Ascending aorta (tissue), 2 donors: ENCODE measurements at regions of chr11 and their contacts with region 1.

Region 1: DNA sequence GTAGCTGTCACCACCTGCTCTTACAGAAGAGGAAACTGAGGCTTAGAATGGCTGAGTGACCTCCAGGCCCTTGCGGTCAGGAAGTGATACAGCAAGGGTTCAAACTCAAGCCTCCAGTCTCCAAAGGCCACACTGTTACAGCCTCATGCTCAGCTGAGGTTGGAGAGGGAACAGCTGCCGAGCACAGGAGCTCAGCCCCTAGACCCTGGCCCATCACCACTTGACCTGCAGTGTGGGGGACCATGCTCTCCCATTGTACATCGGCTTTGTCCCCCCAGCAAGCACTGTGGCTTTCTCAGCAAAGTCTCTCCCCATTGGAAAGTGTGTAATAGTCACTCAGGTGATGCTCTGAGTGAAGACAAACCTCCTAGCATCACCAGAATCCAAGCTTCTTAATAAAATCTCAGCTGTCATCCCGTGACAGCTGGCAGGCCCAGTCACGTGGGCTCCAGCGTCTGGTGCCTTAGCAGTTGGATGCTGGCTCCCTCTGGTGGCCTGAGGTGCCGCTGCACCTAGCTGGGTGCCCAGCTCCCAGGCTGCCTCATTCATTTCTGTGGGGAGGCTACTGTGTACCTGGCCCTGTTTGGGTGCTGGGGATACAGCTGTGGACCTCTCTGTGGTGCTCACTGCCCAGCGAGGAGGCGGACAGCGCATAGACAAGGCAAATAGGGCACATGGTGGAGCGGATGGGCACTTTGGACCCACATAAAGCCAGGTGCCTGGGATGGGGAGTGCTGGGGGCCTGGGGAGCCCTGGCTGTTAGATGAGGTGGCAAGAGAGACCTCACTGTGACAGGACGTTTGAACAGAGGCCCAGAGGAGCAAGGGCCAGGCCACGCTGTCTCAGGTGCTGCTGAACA is 19.1 kb upstream of the MYRF start:
- DNase-seq: peak; percentile 47 to 88
- H3K4me3 ChIP-seq: no peak overlapping the region
- H3K27ac ChIP-seq: peak overlapping the region; percentile 53 to 74
- H3K4me1 ChIP-seq: peaks cover 0 to 6% of the 10 kb centered on the region in 2 donors
- H3K27me3 ChIP-seq: no peaks in the 10 kb centered on the region
- CTCF ChIP-seq: peak; percentile 96 to 99 (median 98)

Region 2: DNA sequence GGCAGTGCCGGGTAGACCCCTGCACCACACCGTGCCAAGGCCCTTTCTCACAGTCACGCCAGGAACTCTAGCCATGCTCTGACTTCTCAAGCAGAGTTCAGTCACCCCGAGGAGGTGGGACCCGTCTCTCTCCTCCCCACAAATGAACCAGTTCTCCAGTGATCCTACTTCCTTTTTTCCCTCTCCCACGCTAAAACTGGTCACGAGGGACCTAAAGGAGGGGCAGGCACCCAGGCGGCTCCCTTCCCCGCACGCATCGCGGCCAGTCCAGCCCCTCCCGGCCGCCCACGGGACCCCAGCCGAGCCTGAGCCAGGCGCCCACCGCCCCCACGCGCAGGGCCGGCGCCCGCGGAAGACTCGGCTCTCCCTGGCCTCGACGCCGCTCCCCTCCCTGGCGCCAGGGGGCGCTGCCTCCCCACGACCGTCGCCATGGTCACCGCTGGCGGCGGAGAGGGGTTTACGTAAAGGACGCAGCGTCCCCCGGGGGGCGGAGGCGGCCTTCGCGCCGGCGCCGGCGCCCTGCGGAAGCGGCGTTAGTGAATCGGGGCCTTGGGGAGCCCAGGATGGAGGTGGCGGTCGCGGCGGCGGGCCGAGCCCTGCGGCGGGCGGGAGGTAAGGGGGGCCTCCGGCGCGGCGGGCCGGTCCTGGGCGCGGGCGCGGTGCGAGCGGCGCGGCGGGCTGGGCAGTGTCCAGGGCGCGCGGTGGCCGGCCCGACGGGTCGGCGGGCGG is 53.3 kb before region 1 on chr11 and contains the start of gene DAGLA:
- intact Hi-C with region 1: loop called (anchors 1 kb)
- DNase-seq: peak in 1 of 2 donors; percentile 76
- H3K4me3 ChIP-seq: peak within 1 kb of the TSS; percentile 51 to 66
- H3K27ac ChIP-seq: no peak within 1 kb of the TSS
- H3K4me1 ChIP-seq: peaks cover 0 to 5% of the 10 kb centered on the region in 2 donors
- H3K27me3 ChIP-seq: peaks cover 4% of the 10 kb centered on the region
- CTCF ChIP-seq: peak; percentile 70 to 97 (median 79)
- total RNA-seq, gene DAGLA: 5.3 TPM